A673 (cell line): ENCODE measurements at regions of chr2 and their contacts with region 1.

Region 1: GRCh38 chr2:72572501-72572900 is 253.3 kb downstream of the EXOC6B start:
- DNase-seq: no peak
- H3K4me3 ChIP-seq: no peak overlapping the region
- H3K27ac ChIP-seq: no peak overlapping the region
- H3K4me1 ChIP-seq: peaks cover 32% of the 10 kb centered on the region
- H3K27me3 ChIP-seq: no peaks in the 10 kb centered on the region
- CTCF ChIP-seq: no peak

Region 2: GRCh38 chr2:72533765-72534164 is 38.7 kb before region 1 on chr2:
- CTCF ChIA-PET with region 1: no interaction called
- POLR2A ChIA-PET with region 1: no interaction called
- intact Hi-C with region 1: loop called (anchors 5 kb)
- DNase-seq: peak; percentile 41
- H3K4me3 ChIP-seq: no peak overlapping the region
- H3K27ac ChIP-seq: peak overlapping the region; percentile 14
- H3K4me1 ChIP-seq: peaks cover 24% of the 10 kb centered on the region
- H3K27me3 ChIP-seq: no peaks in the 10 kb centered on the region
- CTCF ChIP-seq: no peak